Activated CD4-positive, alpha-beta memory T cell treated with anti-CD3 and anti-CD28 coated beads, Interleukin-2, amount 10 ng/mL, durations not matched to agents 7 days and 5 days (primary cell): ENCODE measurements at regions of chr2 and their contacts with region 1.

Region 1: GRCh38 chr2:218245214-218245613 is 15.6 kb upstream of the GPBAR1 start:
- DNase-seq: no peak
- H3K4me3 Mint-ChIP-seq: no peak overlapping the region
- H3K27ac Mint-ChIP-seq: no peak overlapping the region
- H3K4me1 Mint-ChIP-seq: peaks cover 17% of the 10 kb centered on the region
- H3K27me3 Mint-ChIP-seq: no peaks in the 10 kb centered on the region

Region 2: GRCh38 chr2:218234521-218234920 is 10.7 kb before region 1 on chr2:
- CTCF ChIA-PET with region 1: interaction called, 5 read pairs
- POLR2A ChIA-PET with region 1: interaction called, 16 read pairs
- DNase-seq: no peak
- H3K4me3 Mint-ChIP-seq: no peak overlapping the region
- H3K27ac Mint-ChIP-seq: peak overlapping the region; percentile 10
- H3K4me1 Mint-ChIP-seq: peaks cover 40% of the 10 kb centered on the region
- H3K27me3 Mint-ChIP-seq: no peaks in the 10 kb centered on the region

Region 3: GRCh38 chr2:218547978-218548377 is 302.8 kb after region 1 on chr2:
- CTCF ChIA-PET with region 1: no interaction called
- POLR2A ChIA-PET with region 1: no interaction called
- DNase-seq: no peak
- H3K4me3 Mint-ChIP-seq: no peak overlapping the region
- H3K27ac Mint-ChIP-seq: no peak overlapping the region
- H3K4me1 Mint-ChIP-seq: no peaks in the 10 kb centered on the region
- H3K27me3 Mint-ChIP-seq: no peaks in the 10 kb centered on the region